SK-N-SH (cell line): ENCODE measurements at regions of chr16 and their contacts with region 1.

Region 1: DNA sequence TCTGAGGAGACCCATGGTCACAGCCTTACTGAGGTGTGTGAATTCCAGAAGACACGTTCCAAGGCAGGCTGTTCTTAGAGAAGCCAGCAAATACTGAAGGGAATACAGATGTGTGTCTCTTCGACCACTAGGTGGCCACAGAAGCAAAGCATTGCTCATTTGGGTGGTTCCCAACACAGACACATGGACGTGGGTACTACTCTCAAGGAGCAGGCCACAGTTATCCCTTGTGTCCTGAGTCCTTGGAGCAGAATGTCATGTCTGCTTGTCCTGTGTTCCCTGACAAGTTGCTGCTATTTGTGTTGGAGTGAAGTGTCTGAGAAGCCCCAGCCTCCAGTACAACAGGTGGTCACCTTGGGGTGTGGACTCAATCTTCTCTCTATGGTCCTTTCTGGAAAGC is 30.3 kb downstream of the HMOX2 start:
- DNase-seq: peak; percentile 73
- H3K4me3 ChIP-seq: peak overlapping the region in 1 of 2 experiments; percentile 38; a peak in 1 of 4 replicates
- H3K27ac ChIP-seq: no peak overlapping the region
- H3K4me1 ChIP-seq: peaks cover 3 to 4% of the 10 kb centered on the region in 2 experiments; a peak in 3 of 4 replicates
- H3K27me3 ChIP-seq: no peaks in the 10 kb centered on the region
- CTCF ChIP-seq: peak; percentile 81
- EP300 ChIP-seq: no peak
- RAD21 ChIP-seq: peak; percentile 90

Region 2: DNA sequence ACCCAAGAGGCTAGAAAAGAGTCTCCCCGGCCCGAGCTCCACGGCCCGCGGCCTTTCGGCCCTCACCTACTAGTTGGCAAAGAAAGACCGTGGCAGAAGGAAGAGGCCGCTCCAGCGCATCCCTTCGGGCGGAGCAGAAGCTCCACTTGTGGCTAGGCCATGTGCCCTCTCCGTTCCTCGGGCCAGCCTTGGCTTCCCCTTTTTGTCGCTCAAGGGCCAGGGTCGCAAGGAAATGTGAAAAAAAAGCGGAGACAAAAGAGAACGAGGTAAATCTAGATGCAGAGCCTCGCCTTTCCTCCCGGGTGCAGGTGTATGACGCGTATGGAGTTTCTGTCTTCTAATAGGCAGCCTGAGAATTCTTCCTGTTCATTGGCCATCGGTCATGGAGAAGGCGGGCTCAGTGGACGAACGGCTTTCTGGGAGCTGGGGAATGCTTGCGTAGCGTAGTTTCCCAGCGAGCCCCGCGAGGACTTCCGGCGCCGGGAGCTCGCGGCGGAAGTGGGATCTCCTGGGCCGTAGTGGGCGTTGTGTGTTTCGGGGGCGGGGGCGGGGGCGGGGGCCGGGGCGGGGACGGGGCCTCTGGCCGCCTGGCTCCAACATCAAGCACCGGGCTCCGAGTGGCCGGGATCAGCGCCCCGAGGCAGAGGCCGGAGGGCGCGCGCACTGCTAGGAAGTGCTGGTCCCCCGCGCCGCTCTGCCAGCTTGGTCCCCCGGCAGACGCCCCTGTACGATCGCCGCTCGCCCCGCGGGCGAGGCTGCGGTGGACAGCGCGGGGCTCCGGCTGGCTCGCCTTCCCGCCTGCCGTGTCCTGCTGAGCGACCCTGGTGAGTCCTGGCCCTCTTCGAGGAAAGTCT is 1371.7 kb before region 1 on chr16 and contains the start of gene ZNF213:
- CTCF ChIA-PET with region 1: no interaction called
- POLR2A ChIA-PET with region 1: no interaction called
- DNase-seq: peak; percentile 94
- H3K4me3 ChIP-seq: peak within 1 kb of the TSS; percentile 96 to 97
- H3K27ac ChIP-seq: peak within 1 kb of the TSS; percentile 77 to 88
- H3K4me1 ChIP-seq: peaks cover 2 to 8% of the 10 kb centered on the region in 2 experiments; a peak in 3 of 4 replicates
- H3K27me3 ChIP-seq: no peaks in the 10 kb centered on the region
- CTCF ChIP-seq: no peak
- EP300 ChIP-seq: no peak
- RAD21 ChIP-seq: no peak
- polyA plus RNA-seq, gene ZNF213: 0.83 and 1.1 TPM in 2 replicates

Region 3: DNA sequence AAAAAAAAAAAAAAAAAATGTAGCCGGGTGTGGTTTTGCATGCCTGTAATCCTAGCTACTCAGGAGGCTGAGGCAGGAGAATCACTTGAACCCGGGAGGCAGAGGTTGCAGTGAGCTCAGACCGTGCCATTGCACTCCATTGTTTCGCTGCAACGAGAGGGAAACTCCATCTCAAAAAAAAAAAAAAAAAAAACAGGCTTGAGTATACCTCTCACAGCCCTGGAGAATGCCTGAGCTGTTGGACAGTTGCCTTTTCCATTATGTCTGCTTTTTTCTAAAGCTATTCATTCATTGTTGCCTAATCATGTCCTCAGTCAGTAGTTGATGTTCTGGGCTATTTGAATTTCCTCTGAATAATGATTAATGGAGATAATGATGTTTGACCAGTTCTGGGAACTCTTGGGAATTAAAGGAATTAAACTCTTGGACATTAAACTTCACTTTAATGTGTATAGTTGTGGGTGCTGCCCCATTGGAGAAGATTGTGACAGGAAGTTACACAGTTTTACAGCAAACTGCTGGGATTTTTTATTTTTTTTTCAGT is 18.4 kb before region 1 on chr16:
- CTCF ChIA-PET with region 1: interaction called, 22 read pairs
- POLR2A ChIA-PET with region 1: no interaction called
- DNase-seq: no peak
- H3K4me3 ChIP-seq: no peak overlapping the region
- H3K27ac ChIP-seq: peak overlapping the region in 1 of 2 experiments; percentile 79; a peak in 2 of 4 replicates
- H3K4me1 ChIP-seq: peaks cover 0 to 24% of the 10 kb centered on the region in 2 experiments; a peak in 2 of 4 replicates
- H3K27me3 ChIP-seq: no peaks in the 10 kb centered on the region
- CTCF ChIP-seq: no peak
- EP300 ChIP-seq: no peak
- RAD21 ChIP-seq: no peak

Region 4: GRCh38 chr16:4525067-4525466 is 18.6 kb after region 1 on chr16:
- CTCF ChIA-PET with region 1: interaction called, 26 read pairs
- POLR2A ChIA-PET with region 1: interaction called, 3 read pairs
- DNase-seq: no peak
- H3K4me3 ChIP-seq: no peak overlapping the region
- H3K27ac ChIP-seq: no peak overlapping the region
- H3K4me1 ChIP-seq: peaks cover 0 to 20% of the 10 kb centered on the region in 2 experiments; a peak in 1 of 4 replicates
- H3K27me3 ChIP-seq: no peaks in the 10 kb centered on the region
- CTCF ChIP-seq: no peak
- EP300 ChIP-seq: no peak
- RAD21 ChIP-seq: no peak

Region 5: DNA sequence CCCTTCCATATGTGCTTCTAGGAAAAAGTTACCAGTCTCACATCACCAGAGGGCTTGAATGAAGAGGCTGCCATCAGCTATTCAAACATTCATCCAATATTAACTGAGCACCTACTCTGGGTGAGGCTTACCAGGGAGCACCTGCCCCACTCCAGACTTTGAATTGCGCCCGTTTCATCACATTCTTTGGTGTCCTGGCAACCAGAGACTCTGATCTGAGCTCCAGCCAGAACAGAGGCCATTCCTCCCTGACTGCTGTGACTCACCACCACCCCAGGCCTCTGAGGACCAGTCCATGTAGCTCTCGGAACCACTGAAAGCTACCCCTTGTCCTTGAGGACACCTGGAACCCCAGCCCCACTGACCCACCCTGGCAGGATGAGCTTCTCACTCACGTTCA is 49.7 kb after region 1 on chr16 and contains the start of gene C16orf96:
- CTCF ChIA-PET with region 1: interaction called, 182 read pairs
- POLR2A ChIA-PET with region 1: no interaction called
- DNase-seq: no peak
- H3K4me3 ChIP-seq: no peak within 1 kb of the TSS
- H3K27ac ChIP-seq: no peak within 1 kb of the TSS
- H3K4me1 ChIP-seq: no peaks in the 10 kb centered on the region
- H3K27me3 ChIP-seq: no peaks in the 10 kb centered on the region; the same call in 1 of the 2 replicates
- CTCF ChIP-seq: no peak
- EP300 ChIP-seq: no peak
- RAD21 ChIP-seq: no peak
- polyA plus RNA-seq, gene C16orf96: 0.05 TPM in 2 replicates

Region 6: GRCh38 chr16:4586291-4586690 is 79.8 kb after region 1 on chr16:
- CTCF ChIA-PET with region 1: interaction called, 64 read pairs
- POLR2A ChIA-PET with region 1: no interaction called
- DNase-seq: no peak
- H3K4me3 ChIP-seq: no peak overlapping the region
- H3K27ac ChIP-seq: no peak overlapping the region
- H3K4me1 ChIP-seq: no peaks in the 10 kb centered on the region
- H3K27me3 ChIP-seq: no peaks in the 10 kb centered on the region
- CTCF ChIP-seq: no peak
- EP300 ChIP-seq: no peak
- RAD21 ChIP-seq: no peak

Region 7: GRCh38 chr16:4701791-4702427 is 195.5 kb after region 1 on chr16:
- CTCF ChIA-PET with region 1: no interaction called
- POLR2A ChIA-PET with region 1: no interaction called
- DNase-seq: no peak
- H3K4me3 ChIP-seq: no peak overlapping the region
- H3K27ac ChIP-seq: no peak overlapping the region
- H3K4me1 ChIP-seq: no peaks in the 10 kb centered on the region
- H3K27me3 ChIP-seq: no peaks in the 10 kb centered on the region
- CTCF ChIP-seq: no peak
- EP300 ChIP-seq: no peak
- RAD21 ChIP-seq: no peak

Region 8: DNA sequence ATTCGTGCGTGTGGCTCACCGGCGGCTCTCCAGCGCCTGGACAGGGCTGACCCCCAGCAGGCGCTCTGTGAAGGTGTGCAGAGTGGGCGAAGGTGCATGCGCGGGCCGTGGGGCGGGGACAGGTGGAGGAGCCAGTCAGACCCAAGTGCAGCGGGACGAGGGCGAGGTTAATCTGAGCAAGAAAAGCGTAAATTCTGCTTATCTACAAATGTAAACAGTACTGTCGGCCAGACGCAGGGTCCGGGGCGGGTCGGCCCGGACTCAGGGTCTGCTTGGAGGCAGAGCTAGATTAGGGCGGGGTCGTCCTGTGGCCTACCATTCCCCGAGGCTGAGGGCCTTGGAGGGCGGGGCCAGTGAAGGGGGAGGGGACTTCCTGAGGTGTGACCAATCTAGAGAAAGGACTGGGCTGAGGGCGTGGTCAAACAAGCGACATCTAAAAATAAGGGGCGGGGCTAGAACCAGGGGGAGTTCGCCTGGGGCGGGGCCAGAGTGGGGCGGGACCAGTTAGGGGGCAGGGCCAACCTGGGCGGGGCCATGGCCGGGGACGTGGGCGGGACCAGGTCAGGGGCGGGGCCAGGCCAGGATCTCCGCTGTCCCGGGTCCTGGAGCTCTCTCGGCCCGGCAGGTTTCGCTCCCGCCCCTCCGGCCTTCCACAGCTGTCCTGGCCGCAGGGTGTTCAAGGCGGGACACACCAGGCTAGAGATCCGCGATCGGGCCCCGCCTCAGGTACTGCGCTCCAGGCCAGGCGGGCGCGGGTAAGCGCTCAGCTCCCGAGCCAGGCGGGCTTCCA is 451.5 kb after region 1 on chr16 and contains the start of gene SEC14L5:
- CTCF ChIA-PET with region 1: interaction called, 10 read pairs
- POLR2A ChIA-PET with region 1: no interaction called
- DNase-seq: peak; percentile 100
- H3K4me3 ChIP-seq: peak within 1 kb of the TSS; percentile 52 to 68
- H3K27ac ChIP-seq: no peak within 1 kb of the TSS
- H3K4me1 ChIP-seq: peaks cover 0 to 8% of the 10 kb centered on the region in 2 experiments; a peak in 1 of 4 replicates
- H3K27me3 ChIP-seq: no peaks in the 10 kb centered on the region
- CTCF ChIP-seq: no peak
- EP300 ChIP-seq: no peak
- RAD21 ChIP-seq: no peak
- polyA plus RNA-seq, gene SEC14L5: 0.03 and 0.08 TPM in 2 replicates